ENCODE measurements at regions of chr6 and their contacts with region 1.

Region 1: DNA sequence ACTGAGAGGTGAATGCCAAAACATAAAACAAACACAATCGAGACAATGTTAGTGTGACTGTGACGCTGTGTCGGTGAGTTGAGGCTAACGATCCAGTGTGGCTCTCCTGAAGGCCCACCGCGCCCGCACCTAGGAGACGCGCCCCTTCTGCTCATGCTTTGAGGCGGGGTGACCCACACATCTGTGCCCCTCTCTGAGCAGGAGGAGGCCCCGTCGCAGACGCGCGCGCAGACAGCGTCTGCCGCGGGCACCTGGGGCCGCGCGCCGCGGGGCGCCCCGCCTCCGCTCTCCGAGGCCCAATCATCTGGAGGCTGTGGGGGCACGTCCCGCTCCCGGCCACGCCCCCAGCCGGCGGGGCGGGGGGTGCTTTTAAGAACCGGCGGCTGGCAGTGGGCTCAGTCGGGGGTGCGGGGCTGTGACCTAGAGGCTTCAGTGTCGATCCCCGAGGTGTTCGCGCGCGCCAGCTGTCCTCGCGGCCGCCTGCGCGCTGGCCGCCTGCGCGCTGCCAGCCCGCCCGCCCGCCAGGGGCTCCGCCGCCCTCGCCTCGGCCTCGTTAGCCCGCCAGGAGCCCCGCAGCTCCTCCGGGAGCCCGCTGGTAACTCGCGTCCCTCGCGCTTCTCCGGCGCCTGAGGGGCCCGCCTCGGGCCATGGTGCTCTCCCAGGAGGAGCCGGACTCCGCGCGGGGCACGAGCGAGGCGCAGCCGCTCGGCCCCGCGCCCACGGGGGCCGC is at the start of gene SLC16A10:
- DNase-seq: peak; percentile 70 to 92 (median 83)
- ATAC-seq: peak; percentile 86
- H3K4me3 ChIP-seq: peak within 1 kb of the TSS; percentile 56 to 70
- H3K4me3 Mint-ChIP-seq: peak within 1 kb of the TSS; percentile 96
- H3K27ac ChIP-seq: peak within 1 kb of the TSS; percentile 44 to 55
- H3K27ac Mint-ChIP-seq: peak within 1 kb of the TSS; percentile 96
- H3K4me1 ChIP-seq: peaks cover 25% of the 10 kb centered on the region
- H3K4me1 Mint-ChIP-seq: peaks cover 46% of the 10 kb centered on the region
- H3K27me3 ChIP-seq: no peaks in the 10 kb centered on the region
- H3K27me3 Mint-ChIP-seq: peaks cover 2% of the 10 kb centered on the region
- CTCF ChIP-seq: no peak
- total RNA-seq, gene SLC16A10: 15.7 to 18.5 TPM

Region 2: DNA sequence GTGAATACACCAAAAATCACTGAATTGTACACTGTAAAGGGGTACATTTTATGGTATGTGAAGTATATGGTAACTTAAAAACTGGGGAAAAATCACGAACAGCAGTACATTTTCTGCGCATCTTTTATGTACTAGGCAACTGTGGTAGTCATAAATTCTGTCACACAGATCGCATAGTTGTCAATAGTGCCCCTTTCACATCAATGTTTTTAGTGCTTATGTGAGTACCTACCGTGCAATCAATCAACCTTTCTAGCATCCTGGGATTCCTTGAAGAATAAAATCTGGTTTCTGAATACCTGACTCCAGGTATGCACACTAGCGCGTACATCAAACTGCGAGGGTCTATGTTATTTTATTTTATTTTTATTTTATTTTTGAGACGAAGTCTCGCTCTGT is 106.1 kb before region 1 on chr6:
- CTCF ChIA-PET with region 1: no interaction called
- POLR2A ChIA-PET with region 1: no interaction called
- intact Hi-C with region 1: loop called in 1 of 2 experiments (anchors 2 kb)
- DNase-seq: peak in 1 of 9 experiments; percentile 49
- ATAC-seq: peak; percentile 1
- H3K4me3 ChIP-seq: peak overlapping the region; percentile 85 to 95
- H3K4me3 Mint-ChIP-seq: peak overlapping the region; percentile 99
- H3K27ac ChIP-seq: peak overlapping the region; percentile 90 to 97
- H3K27ac Mint-ChIP-seq: peak overlapping the region; percentile 100
- H3K4me1 ChIP-seq: peaks cover 6% of the 10 kb centered on the region
- H3K4me1 Mint-ChIP-seq: peaks cover 45% of the 10 kb centered on the region
- H3K27me3 ChIP-seq: no peaks in the 10 kb centered on the region
- H3K27me3 Mint-ChIP-seq: no peaks in the 10 kb centered on the region
- CTCF ChIP-seq: no peak

Region 3: DNA sequence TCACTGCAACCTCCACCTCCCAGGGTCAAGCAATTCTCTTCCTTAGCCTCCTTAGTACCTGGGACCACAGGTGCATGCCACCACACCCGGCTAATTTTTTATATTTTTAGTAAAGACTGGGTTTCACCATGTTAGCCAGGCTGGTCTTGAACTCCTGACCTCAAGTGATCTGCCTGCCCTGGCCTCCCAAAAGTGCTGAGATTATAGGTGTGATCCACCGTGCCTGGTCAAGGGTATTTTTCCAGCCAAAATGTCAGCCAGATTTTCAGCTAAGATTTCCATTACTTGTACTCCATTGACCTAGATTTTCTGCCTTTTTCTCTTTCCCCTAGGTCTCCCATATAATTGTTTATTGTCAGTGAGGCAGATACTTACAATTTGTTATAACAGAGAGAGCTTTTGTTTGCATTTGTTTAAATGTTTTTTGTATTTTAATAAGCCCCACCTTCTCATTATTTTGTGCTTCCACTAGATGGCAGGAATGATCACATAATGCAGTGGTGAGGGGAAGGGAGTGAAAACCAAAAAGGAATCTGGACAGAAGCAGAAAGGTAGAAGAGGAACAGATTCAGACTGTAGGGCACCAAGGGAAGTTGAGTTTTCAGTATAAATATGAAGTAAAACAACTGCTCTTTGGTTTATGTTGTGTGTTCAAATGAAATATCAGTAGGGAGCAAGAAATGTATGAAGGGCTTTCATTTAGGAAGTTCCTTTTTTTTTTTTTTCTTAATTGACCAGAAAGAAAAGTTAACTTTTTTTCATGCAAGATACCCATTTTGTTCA is 75.7 kb before region 1 on chr6:
- CTCF ChIA-PET with region 1: no interaction called
- POLR2A ChIA-PET with region 1: no interaction called
- intact Hi-C with region 1: no loop called
- DNase-seq: peak in 2 of 9 experiments; percentile 45 to 62
- ATAC-seq: peak; percentile 69
- H3K4me3 ChIP-seq: no peak overlapping the region
- H3K4me3 Mint-ChIP-seq: no peak overlapping the region
- H3K27ac ChIP-seq: no peak overlapping the region
- H3K27ac Mint-ChIP-seq: no peak overlapping the region
- H3K4me1 ChIP-seq: no peaks in the 10 kb centered on the region
- H3K4me1 Mint-ChIP-seq: peaks cover 4% of the 10 kb centered on the region
- H3K27me3 ChIP-seq: no peaks in the 10 kb centered on the region
- H3K27me3 Mint-ChIP-seq: no peaks in the 10 kb centered on the region
- CTCF ChIP-seq: peak; percentile 71

Region 4: GRCh38 chr6:111113336-111114086 is 26.2 kb after region 1 on chr6:
- CTCF ChIA-PET with region 1: no interaction called
- POLR2A ChIA-PET with region 1: interaction called, 3 read pairs
- intact Hi-C with region 1: loop called (anchors 1 to 2 kb)
- DNase-seq: peak in 4 of 9 experiments; percentile 20 to 47 (median 28)
- ATAC-seq: peak; percentile 53
- H3K4me3 ChIP-seq: peak overlapping the region in 1 of 2 experiments; percentile 1
- H3K4me3 Mint-ChIP-seq: peak overlapping the region; percentile 59
- H3K27ac ChIP-seq: peak overlapping the region; percentile 31 to 65
- H3K27ac Mint-ChIP-seq: peak overlapping the region; percentile 93
- H3K4me1 ChIP-seq: peaks cover 33% of the 10 kb centered on the region
- H3K4me1 Mint-ChIP-seq: peaks cover 49% of the 10 kb centered on the region
- H3K27me3 ChIP-seq: no peaks in the 10 kb centered on the region
- H3K27me3 Mint-ChIP-seq: no peaks in the 10 kb centered on the region
- CTCF ChIP-seq: no peak

Region 5: GRCh38 chr6:111122458-111123286 is 35.4 kb after region 1 on chr6:
- CTCF ChIA-PET with region 1: no interaction called
- POLR2A ChIA-PET with region 1: no interaction called
- intact Hi-C with region 1: loop called in 1 of 2 experiments (anchors 2 kb)
- DNase-seq: peak in 2 of 9 experiments; percentile 10 to 21
- ATAC-seq: peak; percentile 55
- H3K4me3 ChIP-seq: no peak overlapping the region
- H3K4me3 Mint-ChIP-seq: peak overlapping the region; percentile 46
- H3K27ac ChIP-seq: peak overlapping the region in 1 of 2 experiments; percentile 33
- H3K27ac Mint-ChIP-seq: peak overlapping the region; percentile 88
- H3K4me1 ChIP-seq: peaks cover 16% of the 10 kb centered on the region
- H3K4me1 Mint-ChIP-seq: peaks cover 33% of the 10 kb centered on the region
- H3K27me3 ChIP-seq: no peaks in the 10 kb centered on the region
- H3K27me3 Mint-ChIP-seq: no peaks in the 10 kb centered on the region
- CTCF ChIP-seq: no peak

Region 6: GRCh38 chr6:111171577-111172400 is 84.5 kb after region 1 on chr6:
- CTCF ChIA-PET with region 1: no interaction called
- POLR2A ChIA-PET with region 1: no interaction called
- intact Hi-C with region 1: loop called in 1 of 2 experiments (anchors 5 kb)
- DNase-seq: no peak
- ATAC-seq: no peak
- H3K4me3 ChIP-seq: no peak overlapping the region
- H3K4me3 Mint-ChIP-seq: no peak overlapping the region
- H3K27ac ChIP-seq: no peak overlapping the region
- H3K27ac Mint-ChIP-seq: no peak overlapping the region
- H3K4me1 ChIP-seq: peaks cover 23% of the 10 kb centered on the region
- H3K4me1 Mint-ChIP-seq: peaks cover 25% of the 10 kb centered on the region
- H3K27me3 ChIP-seq: no peaks in the 10 kb centered on the region
- H3K27me3 Mint-ChIP-seq: no peaks in the 10 kb centered on the region
- CTCF ChIP-seq: no peak

Region 7: DNA sequence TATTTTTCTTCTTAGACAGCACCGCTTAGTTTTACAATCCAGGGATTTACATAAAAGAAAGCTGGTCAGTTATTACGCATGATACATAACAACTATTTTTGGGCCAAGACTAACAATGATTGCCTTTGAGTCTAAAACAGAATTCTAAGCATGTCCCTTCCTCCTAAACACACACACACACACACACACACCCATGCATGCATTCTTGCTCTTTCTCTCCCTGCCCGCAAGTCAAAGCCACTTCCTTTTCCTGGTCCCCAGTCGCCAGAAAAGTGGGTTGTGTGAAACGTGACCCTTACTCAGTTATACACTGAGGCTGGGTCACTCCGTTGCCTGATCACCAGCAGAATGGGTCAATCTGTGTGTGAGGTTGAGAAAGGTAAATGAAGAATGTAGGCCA is 754.6 kb after region 1 on chr6:
- CTCF ChIA-PET with region 1: no interaction called
- POLR2A ChIA-PET with region 1: no interaction called
- intact Hi-C with region 1: loop called in 1 of 2 experiments (anchors 5 kb)
- DNase-seq: peak in 6 of 9 experiments; percentile 46 to 74 (median 60)
- ATAC-seq: no peak
- H3K4me3 ChIP-seq: peak overlapping the region in 1 of 2 experiments; percentile 16
- H3K4me3 Mint-ChIP-seq: no peak overlapping the region
- H3K27ac ChIP-seq: peak overlapping the region in 1 of 2 experiments; percentile 75
- H3K27ac Mint-ChIP-seq: no peak overlapping the region
- H3K4me1 ChIP-seq: peaks cover 100% of the 10 kb centered on the region
- H3K4me1 Mint-ChIP-seq: peaks cover 36% of the 10 kb centered on the region
- H3K27me3 ChIP-seq: no peaks in the 10 kb centered on the region
- H3K27me3 Mint-ChIP-seq: no peaks in the 10 kb centered on the region
- CTCF ChIP-seq: no peak

Region 8: GRCh38 chr6:112464901-112465661 is 1377.8 kb after region 1 on chr6:
- CTCF ChIA-PET with region 1: no interaction called
- POLR2A ChIA-PET with region 1: no interaction called
- intact Hi-C with region 1: no loop called
- DNase-seq: no peak
- ATAC-seq: no peak
- H3K4me3 ChIP-seq: no peak overlapping the region
- H3K4me3 Mint-ChIP-seq: no peak overlapping the region
- H3K27ac ChIP-seq: no peak overlapping the region
- H3K27ac Mint-ChIP-seq: no peak overlapping the region
- H3K4me1 ChIP-seq: no peaks in the 10 kb centered on the region
- H3K4me1 Mint-ChIP-seq: no peaks in the 10 kb centered on the region
- H3K27me3 ChIP-seq: no peaks in the 10 kb centered on the region
- H3K27me3 Mint-ChIP-seq: no peaks in the 10 kb centered on the region
- CTCF ChIP-seq: no peak

Measured in CD8-positive, alpha-beta T cell (primary cell).